CD8-positive, alpha-beta memory T cell (primary cell): ENCODE measurements at regions of chr12 and their contacts with region 1.

Region 1: DNA sequence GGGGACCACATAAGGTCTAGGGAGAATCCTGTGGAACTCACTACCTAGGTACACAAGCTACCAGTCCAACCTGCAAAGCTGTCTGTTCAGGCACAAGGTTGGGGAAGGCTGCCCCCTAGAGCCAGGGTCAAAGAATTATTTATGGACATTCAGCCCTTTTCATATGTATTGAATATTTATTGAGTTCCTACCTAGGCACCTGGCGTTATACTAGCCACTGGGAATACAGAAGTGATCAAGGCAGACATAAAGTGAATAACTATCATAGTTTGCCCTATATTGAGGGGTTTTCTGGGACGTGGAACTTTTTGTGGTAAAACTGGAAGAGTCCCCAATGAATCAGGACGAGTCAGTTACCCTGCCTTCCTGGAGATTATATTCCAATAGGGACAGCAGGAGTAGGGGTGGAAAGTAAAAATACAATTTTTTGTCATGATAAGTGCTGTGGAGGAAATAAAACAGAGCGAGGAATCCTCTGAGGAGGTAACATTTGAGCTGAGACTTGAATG is 5.8 kb upstream of the SLC48A1 start:
- DNase-seq: peak; percentile 53 to 81 (median 59)
- H3K4me3 ChIP-seq: no peak overlapping the region
- H3K4me3 Mint-ChIP-seq: peak overlapping the region in 1 of 7 donors; percentile 73
- H3K27ac ChIP-seq: no peak overlapping the region
- H3K27ac Mint-ChIP-seq: peak overlapping the region in 4 of 8 donors; percentile 16 to 62 (median 18)
- H3K4me1 ChIP-seq: peaks cover 11% of the 10 kb centered on the region
- H3K4me1 Mint-ChIP-seq: peaks cover 19 to 22% (median 20%) of the 10 kb centered on the region in 3 donors
- H3K27me3 ChIP-seq: no peaks in the 10 kb centered on the region
- H3K27me3 Mint-ChIP-seq: peaks cover 0 to under 1% of the 10 kb centered on the region in 2 donors

Region 2: DNA sequence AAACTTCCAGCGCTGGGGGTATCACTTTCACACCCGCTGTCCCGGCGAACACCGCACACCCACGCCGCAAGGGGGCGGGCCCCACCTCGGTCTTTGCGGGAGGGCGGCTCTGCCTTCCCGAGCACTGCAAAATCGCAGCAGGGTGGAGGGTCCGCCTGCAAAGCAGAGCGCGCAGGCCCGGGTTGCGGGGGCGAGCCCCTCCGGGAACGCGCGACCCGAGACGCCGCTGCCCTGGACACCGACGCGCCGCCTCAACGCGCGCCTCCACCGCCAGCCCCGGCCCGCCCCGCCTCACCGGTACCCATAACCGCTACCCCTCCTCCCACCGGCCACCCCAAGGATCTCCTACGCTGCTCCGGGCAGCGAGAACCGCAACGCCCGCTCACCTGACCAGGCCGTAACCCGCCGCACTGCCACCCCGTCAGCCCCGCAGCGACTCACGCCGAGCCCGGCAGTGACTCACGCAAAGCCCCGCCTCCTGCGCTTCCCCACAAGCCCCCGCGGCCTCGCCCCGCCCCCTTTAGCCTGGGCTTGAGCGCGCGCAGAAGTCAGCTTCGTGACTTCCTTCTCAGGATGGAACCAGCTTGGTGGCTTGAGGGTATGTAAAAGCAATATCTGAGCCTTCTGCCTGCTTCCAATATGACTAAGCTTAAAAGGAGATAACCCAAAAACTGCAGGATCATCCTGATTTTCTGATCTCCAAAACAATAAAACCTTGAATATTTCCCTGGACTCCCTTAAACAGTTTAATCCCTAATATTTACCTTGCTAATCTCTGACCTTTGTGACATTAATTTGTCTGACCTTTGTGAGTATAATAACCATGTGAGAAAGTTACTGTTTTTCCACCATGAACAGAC is 61.5 kb before region 1 on chr12 and contains the start of gene RPAP3:
- CTCF ChIA-PET with region 1: interaction called, 169 read pairs
- POLR2A ChIA-PET with region 1: interaction called, 6 read pairs
- DNase-seq: peak; percentile 91 to 97 (median 95)
- H3K4me3 ChIP-seq: peak within 1 kb of the TSS; percentile 83
- H3K4me3 Mint-ChIP-seq: peak within 1 kb of the TSS; percentile 90 to 99 (median 98)
- H3K27ac ChIP-seq: peak within 1 kb of the TSS; percentile 79
- H3K27ac Mint-ChIP-seq: peak within 1 kb of the TSS; percentile 90 to 100 (median 94)
- H3K4me1 ChIP-seq: peaks cover 40% of the 10 kb centered on the region
- H3K4me1 Mint-ChIP-seq: peaks cover 39 to 73% (median 61%) of the 10 kb centered on the region in 3 donors
- H3K27me3 ChIP-seq: no peaks in the 10 kb centered on the region
- H3K27me3 Mint-ChIP-seq: no peaks in the 10 kb centered on the region
- total RNA-seq, gene RPAP3: 54.0 to 58.1 TPM

Region 3: GRCh38 chr12:47725893-47726292 is 41.4 kb before region 1 on chr12:
- CTCF ChIA-PET with region 1: interaction called, 24 read pairs
- POLR2A ChIA-PET with region 1: no interaction called
- DNase-seq: no peak
- H3K4me3 ChIP-seq: no peak overlapping the region
- H3K4me3 Mint-ChIP-seq: no peak overlapping the region
- H3K27ac ChIP-seq: no peak overlapping the region
- H3K27ac Mint-ChIP-seq: no peak overlapping the region
- H3K4me1 ChIP-seq: peaks cover 19% of the 10 kb centered on the region
- H3K4me1 Mint-ChIP-seq: peaks cover 23 to 28% (median 23%) of the 10 kb centered on the region in 3 donors
- H3K27me3 ChIP-seq: no peaks in the 10 kb centered on the region
- H3K27me3 Mint-ChIP-seq: peaks cover 0 to 5% of the 10 kb centered on the region in 2 donors

Region 4: DNA sequence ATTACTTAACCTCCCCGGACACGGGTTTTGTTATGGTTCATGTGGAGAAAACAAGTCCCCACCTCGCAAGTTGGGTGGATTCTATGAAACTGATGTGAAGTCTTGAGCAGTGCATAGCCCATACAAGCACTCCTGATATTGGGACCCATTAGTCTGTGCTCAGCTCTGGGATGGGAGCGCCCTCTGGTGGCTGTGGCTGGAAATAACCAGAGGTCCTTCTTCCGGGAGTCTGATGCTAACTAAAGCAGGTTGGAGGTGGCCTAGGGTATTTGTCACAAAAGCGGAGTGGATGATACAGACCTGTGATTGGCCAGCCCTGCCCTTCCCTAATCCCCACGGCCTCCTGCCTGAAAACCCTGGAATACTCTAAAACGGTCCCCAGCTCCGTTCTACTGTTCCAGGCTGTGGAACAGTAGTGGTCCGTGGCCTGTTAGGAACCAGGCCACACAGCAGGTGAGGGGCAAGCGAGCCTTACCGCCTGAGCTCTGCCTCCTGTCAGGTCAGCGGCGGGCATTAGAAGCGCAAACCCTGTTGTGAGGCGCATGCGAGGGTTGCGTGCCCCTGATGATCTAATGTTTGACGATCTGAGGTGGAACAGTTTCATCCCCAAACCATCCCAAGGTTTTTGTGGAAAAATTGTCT is 12.2 kb after region 1 on chr12:
- CTCF ChIA-PET with region 1: interaction called, 34 read pairs
- POLR2A ChIA-PET with region 1: interaction called, 3 read pairs
- DNase-seq: peak; percentile 77 to 92 (median 85)
- H3K4me3 ChIP-seq: no peak overlapping the region
- H3K4me3 Mint-ChIP-seq: peak overlapping the region in 1 of 7 donors; percentile 75
- H3K27ac ChIP-seq: no peak overlapping the region
- H3K27ac Mint-ChIP-seq: peak overlapping the region in 5 of 8 donors; percentile 8 to 66 (median 39)
- H3K4me1 ChIP-seq: peaks cover 8% of the 10 kb centered on the region
- H3K4me1 Mint-ChIP-seq: peaks cover 7 to 15% (median 9%) of the 10 kb centered on the region in 3 donors
- H3K27me3 ChIP-seq: no peaks in the 10 kb centered on the region
- H3K27me3 Mint-ChIP-seq: no peaks in the 10 kb centered on the region

Region 5: GRCh38 chr12:47812797-47813510 is 45.7 kb after region 1 on chr12:
- CTCF ChIA-PET with region 1: interaction called, 15 read pairs
- POLR2A ChIA-PET with region 1: no interaction called
- DNase-seq: peak; percentile 79 to 93 (median 82)
- H3K4me3 ChIP-seq: peak overlapping the region; percentile 72
- H3K4me3 Mint-ChIP-seq: peak overlapping the region; percentile 84 to 94 (median 90)
- H3K27ac ChIP-seq: peak overlapping the region; percentile 86
- H3K27ac Mint-ChIP-seq: peak overlapping the region; percentile 93 to 99 (median 98)
- H3K4me1 ChIP-seq: peaks cover 94% of the 10 kb centered on the region
- H3K4me1 Mint-ChIP-seq: peaks cover 85 to 99% (median 98%) of the 10 kb centered on the region in 3 donors
- H3K27me3 ChIP-seq: no peaks in the 10 kb centered on the region
- H3K27me3 Mint-ChIP-seq: peaks cover 0 to 4% of the 10 kb centered on the region in 2 donors